ENCODE measurements at regions of chr19 and their contacts with region 1.

Region 1: DNA sequence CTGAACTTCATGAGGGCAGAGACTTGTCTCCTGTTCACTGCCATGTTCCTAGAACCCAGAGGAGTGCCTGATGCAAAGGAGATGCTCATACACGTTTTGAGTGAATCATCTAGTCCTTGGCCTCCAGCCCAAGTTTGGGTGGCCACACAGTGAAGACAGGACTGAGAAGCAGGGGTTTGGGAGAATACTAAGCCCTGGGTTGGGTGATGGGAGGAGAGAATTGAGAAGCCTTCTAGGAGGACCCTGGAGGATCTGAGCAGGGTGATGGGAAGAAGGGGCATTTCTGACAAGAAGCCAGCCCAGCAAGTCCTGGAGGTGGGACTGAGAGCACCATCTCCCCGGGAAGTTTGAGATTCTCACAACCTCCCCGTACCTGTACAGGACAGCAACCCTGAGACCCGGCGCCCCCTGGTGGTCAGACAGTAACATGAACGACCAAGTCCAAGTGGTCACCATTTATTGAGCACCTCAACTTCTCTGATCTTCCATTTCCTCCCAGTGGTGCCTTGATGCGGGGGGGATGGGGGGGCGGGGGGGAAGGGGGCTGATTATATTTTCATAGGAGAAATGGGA is 11.0 kb downstream of the CTU1 start:
- DNase-seq: peak; percentile 70 to 81
- H3K4me3 ChIP-seq: no peak overlapping the region
- H3K4me3 Mint-ChIP-seq: no peak overlapping the region
- H3K27ac Mint-ChIP-seq: no peak overlapping the region
- H3K4me1 ChIP-seq: no peaks in the 10 kb centered on the region
- H3K4me1 Mint-ChIP-seq: peaks cover 6% of the 10 kb centered on the region
- H3K27me3 ChIP-seq: no peaks in the 10 kb centered on the region
- H3K27me3 Mint-ChIP-seq: no peaks in the 10 kb centered on the region
- CTCF ChIP-seq: peak; percentile 64 to 79

Region 2: DNA sequence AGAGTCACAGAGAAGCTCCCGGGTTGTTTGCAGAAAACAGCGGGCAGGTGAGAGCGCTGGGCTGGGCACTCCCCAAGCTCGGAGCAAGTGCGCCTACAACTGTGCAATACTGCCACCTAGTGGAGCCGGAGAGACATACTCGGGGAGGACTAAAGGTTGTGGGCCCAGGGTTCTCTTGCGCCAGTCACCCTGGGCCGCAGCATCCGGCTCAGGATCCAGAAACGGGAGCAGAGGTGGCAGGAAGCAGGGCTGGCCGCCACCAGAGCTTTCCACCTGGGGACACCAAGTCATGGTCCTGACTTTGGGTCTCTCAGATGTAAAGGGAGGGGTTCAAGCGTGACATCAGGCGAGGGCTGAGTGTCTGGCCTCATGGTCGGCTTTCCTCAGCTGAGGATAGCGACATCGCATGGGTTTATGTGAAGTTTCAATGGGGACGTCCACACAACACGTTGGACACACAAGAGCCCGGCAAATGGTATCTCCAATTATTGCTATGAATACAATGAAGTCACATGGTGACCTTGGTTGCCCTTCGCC is 174.9 kb before region 1 on chr19:
- CTCF ChIA-PET with region 1: interaction called, 9 read pairs
- POLR2A ChIA-PET with region 1: no interaction called
- intact Hi-C with region 1: loop called (anchors 2 kb)
- DNase-seq: peak; percentile 80 to 86
- H3K4me3 ChIP-seq: no peak overlapping the region
- H3K4me3 Mint-ChIP-seq: no peak overlapping the region
- H3K27ac Mint-ChIP-seq: no peak overlapping the region
- H3K4me1 ChIP-seq: no peaks in the 10 kb centered on the region
- H3K4me1 Mint-ChIP-seq: no peaks in the 10 kb centered on the region
- H3K27me3 ChIP-seq: no peaks in the 10 kb centered on the region; the same call in 1 of the 2 replicates
- H3K27me3 Mint-ChIP-seq: peaks cover 17% of the 10 kb centered on the region
- CTCF ChIP-seq: peak; percentile 86 to 93

Region 3: GRCh38 chr19:50981587-50982146 is 115.6 kb before region 1 on chr19:
- CTCF ChIA-PET with region 1: no interaction called
- POLR2A ChIA-PET with region 1: interaction called, 11 read pairs
- intact Hi-C with region 1: no loop called
- DNase-seq: no peak
- H3K4me3 ChIP-seq: no peak overlapping the region
- H3K4me3 Mint-ChIP-seq: no peak overlapping the region
- H3K27ac Mint-ChIP-seq: no peak overlapping the region
- H3K4me1 ChIP-seq: peaks cover 10% of the 10 kb centered on the region; the same call in 1 of the 2 replicates
- H3K4me1 Mint-ChIP-seq: no peaks in the 10 kb centered on the region
- H3K27me3 ChIP-seq: no peaks in the 10 kb centered on the region
- H3K27me3 Mint-ChIP-seq: peaks cover 12% of the 10 kb centered on the region
- CTCF ChIP-seq: no peak

Region 4: DNA sequence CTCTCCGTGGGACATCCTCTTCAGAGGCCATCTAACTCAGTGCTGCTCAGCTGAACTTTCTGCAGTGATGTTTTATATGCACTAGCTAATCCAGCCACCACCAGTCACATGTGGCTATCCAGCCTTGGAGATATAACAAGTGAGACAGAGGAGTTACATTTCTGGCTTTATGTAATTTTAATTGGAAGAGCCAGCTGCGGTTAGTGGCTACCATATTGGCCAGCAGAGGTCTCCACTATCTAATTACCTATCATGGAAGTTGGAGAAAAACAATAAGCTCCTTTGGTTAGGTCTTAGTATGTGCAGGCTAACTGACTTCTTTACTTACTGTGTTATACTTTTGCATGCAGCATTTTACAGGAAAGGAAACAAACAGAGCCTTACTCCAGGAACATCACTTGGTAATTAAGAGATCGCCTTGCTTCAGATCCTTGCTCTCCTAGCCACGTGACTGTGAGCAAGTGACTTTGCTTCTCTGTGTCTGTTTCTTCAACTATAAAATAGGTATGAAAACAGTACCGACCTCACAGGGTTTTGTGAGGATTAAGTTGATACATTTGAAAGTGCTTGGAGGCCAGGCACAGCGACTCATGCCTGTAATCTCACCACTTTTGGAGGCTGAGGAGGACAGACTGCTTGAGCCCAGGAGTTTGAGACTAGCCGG is 76.1 kb before region 1 on chr19:
- CTCF ChIA-PET with region 1: interaction called, 61 read pairs
- POLR2A ChIA-PET with region 1: no interaction called
- intact Hi-C with region 1: loop called (anchors 1 kb)
- DNase-seq: peak in 1 of 2 experiments; percentile 54
- H3K4me3 ChIP-seq: no peak overlapping the region
- H3K4me3 Mint-ChIP-seq: no peak overlapping the region
- H3K27ac Mint-ChIP-seq: no peak overlapping the region
- H3K4me1 ChIP-seq: 0 out of 2 replicates have a peak, but pooled peaks cover 4% of the 10 kb centered on the region
- H3K4me1 Mint-ChIP-seq: no peaks in the 10 kb centered on the region
- H3K27me3 ChIP-seq: peaks cover 3% of the 10 kb centered on the region
- H3K27me3 Mint-ChIP-seq: peaks cover 26% of the 10 kb centered on the region
- CTCF ChIP-seq: peak; percentile 67 to 70

Region 5: DNA sequence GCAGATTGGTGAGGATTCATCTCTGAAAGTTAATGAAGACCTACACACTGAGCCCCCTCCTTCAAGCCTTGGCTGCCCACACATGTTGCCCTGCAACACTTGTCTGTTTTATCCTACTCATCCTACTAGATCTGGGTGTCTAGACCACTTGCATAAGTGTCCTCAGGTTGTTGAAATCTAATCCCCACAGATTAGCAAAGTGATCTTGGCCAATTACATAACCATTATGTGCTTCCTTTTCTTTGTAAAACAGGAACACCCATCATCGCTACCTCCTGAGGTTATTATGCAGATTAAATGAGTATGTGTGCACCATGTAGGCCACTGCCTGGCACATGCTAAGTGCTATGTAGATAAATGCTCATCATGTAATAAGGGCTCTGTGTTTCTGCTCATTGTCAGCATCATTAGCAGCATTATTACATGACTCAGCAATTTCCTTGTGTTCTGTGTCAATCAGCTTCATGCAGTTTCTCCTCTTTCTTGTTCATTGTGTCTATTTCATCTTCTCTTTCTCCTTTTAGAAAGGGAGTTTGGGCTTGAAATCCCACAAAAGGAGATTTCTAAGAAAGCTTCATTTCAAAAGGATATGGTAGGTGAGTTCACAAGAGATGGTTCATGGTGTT is 489.0 kb after region 1 on chr19:
- CTCF ChIA-PET with region 1: no interaction called
- POLR2A ChIA-PET with region 1: no interaction called
- intact Hi-C with region 1: no loop called
- DNase-seq: no peak
- H3K4me3 ChIP-seq: no peak overlapping the region
- H3K4me3 Mint-ChIP-seq: no peak overlapping the region
- H3K27ac Mint-ChIP-seq: no peak overlapping the region
- H3K4me1 ChIP-seq: no peaks in the 10 kb centered on the region
- H3K4me1 Mint-ChIP-seq: no peaks in the 10 kb centered on the region
- H3K27me3 ChIP-seq: no peaks in the 10 kb centered on the region
- H3K27me3 Mint-ChIP-seq: no peaks in the 10 kb centered on the region
- CTCF ChIP-seq: no peak